ENCODE measurements at regions of chr5 and their contacts with region 1.

Region 1: DNA sequence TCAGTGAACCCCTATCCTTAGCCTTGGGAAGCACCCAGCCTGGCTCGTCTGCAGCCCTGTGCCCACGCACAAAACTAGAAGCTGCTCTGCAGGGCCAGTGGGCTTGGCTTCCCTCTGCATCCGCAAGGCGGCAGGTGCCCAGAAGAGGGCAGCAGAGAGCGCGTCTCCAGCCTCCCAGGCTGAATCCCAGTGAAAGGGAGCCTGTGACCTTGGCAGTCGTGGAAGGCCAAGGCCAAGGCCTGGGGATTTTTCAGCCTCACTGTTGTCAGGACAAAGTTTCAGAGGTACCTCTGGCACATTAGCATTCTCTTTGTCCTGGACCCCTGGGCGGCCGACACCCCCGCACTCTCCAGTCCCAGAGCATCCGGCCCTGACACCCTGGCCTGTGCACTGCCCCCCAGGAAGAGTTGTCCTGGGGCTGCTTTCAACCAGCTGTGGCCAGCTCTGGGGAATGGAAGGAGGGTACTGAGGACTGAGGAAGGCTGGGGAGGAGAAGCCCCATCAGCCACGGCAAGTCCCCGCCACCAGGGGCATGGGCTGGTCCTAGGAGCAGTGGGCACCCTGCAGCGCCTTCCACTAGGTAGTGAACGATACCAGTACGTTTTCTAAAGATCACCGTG is 63.6 kb upstream of the IL17B start:
- DNase-seq: peak; percentile 81 to 92
- H3K4me3 ChIP-seq: no peak overlapping the region
- H3K4me3 Mint-ChIP-seq: no peak overlapping the region
- H3K27ac Mint-ChIP-seq: peak overlapping the region; percentile 47
- H3K4me1 ChIP-seq: peaks cover 23% of the 10 kb centered on the region
- H3K4me1 Mint-ChIP-seq: peaks cover 30% of the 10 kb centered on the region
- H3K27me3 ChIP-seq: no peaks in the 10 kb centered on the region
- H3K27me3 Mint-ChIP-seq: no peaks in the 10 kb centered on the region
- CTCF ChIP-seq: peak; percentile 85 to 95

Region 2: DNA sequence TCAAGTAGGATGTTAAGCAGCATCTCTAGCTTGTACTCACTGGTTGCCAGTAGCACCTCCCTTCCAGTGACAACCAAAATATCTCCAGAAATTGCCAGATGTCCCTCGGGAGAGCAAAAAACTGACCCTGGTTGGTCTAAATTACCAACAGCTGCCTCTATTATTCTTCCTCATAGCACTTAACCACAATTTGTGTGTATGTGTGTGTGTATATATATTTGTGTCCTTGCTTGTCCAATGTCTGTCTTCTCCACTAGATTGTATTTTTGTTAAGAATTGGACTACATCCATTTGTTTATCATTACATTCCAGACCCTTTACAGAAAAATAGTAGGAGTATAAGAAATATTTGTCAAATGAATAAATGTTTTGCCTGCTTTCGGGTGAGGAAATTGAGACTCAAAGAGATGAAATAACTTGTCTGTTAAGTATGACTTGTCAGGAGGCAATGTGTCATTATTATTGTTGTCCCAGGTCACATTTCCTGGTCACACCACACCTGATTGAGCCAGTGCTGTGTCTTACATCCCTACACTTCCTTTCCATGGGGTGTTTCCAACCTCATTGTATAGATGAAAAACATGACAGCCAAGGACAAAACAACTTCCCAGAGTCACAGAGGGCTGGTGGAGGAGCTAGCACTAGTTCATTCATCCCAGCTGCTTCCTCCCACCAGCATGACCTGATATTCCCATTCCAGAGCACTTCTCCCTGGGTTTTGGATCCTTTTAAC is 108.8 kb before region 1 on chr5:
- CTCF ChIA-PET with region 1: no interaction called
- POLR2A ChIA-PET with region 1: no interaction called
- intact Hi-C with region 1: no loop called
- DNase-seq: no peak
- H3K4me3 ChIP-seq: no peak overlapping the region
- H3K4me3 Mint-ChIP-seq: no peak overlapping the region
- H3K27ac Mint-ChIP-seq: no peak overlapping the region
- H3K4me1 ChIP-seq: peaks cover 9% of the 10 kb centered on the region; the same call in 1 of the 2 replicates
- H3K4me1 Mint-ChIP-seq: peaks cover 14% of the 10 kb centered on the region
- H3K27me3 ChIP-seq: no peaks in the 10 kb centered on the region
- H3K27me3 Mint-ChIP-seq: peaks cover 2% of the 10 kb centered on the region
- CTCF ChIP-seq: no peak

Region 3: GRCh38 chr5:149485655-149486425 is 43.2 kb after region 1 on chr5:
- CTCF ChIA-PET with region 1: interaction called, 4 read pairs
- POLR2A ChIA-PET with region 1: no interaction called
- intact Hi-C with region 1: loop called (anchors 2 kb)
- DNase-seq: peak; percentile 33 to 49
- H3K4me3 ChIP-seq: no peak overlapping the region
- H3K4me3 Mint-ChIP-seq: no peak overlapping the region
- H3K27ac Mint-ChIP-seq: peak overlapping the region; percentile 36
- H3K4me1 ChIP-seq: peaks cover 39% of the 10 kb centered on the region
- H3K4me1 Mint-ChIP-seq: peaks cover 44% of the 10 kb centered on the region
- H3K27me3 ChIP-seq: no peaks in the 10 kb centered on the region
- H3K27me3 Mint-ChIP-seq: no peaks in the 10 kb centered on the region
- CTCF ChIP-seq: no peak

Region 4: DNA sequence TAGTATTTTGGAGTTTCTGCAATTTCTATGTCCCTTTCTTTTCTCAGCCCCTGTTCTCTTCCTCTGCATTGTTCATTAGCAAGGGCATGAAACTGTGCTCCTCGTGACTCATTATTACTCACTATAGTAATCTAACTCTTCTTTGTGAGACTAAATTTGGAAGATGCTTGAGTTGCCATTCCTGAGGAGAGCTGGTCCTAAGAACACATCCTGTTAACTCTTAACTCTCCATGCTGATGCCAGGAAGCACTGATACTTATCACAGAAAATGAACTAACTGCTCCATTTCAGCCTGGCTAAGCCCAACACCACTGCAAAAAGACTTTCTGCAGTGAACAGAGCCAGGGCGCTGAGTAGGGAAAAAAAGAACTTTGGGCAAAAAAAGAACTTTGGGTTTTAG is 119.2 kb after region 1 on chr5:
- CTCF ChIA-PET with region 1: interaction called, 4 read pairs
- POLR2A ChIA-PET with region 1: no interaction called
- intact Hi-C with region 1: loop called (anchors 1 kb)
- DNase-seq: no peak
- H3K4me3 ChIP-seq: no peak overlapping the region
- H3K4me3 Mint-ChIP-seq: no peak overlapping the region
- H3K27ac Mint-ChIP-seq: peak overlapping the region; percentile 26
- H3K4me1 ChIP-seq: peaks cover 33% of the 10 kb centered on the region
- H3K4me1 Mint-ChIP-seq: peaks cover 18% of the 10 kb centered on the region
- H3K27me3 ChIP-seq: no peaks in the 10 kb centered on the region
- H3K27me3 Mint-ChIP-seq: no peaks in the 10 kb centered on the region
- CTCF ChIP-seq: no peak